Naive thymus-derived CD4-positive, alpha-beta T cell (primary cell): ENCODE measurements at regions of chr11 and their contacts with region 1.

Region 1: DNA sequence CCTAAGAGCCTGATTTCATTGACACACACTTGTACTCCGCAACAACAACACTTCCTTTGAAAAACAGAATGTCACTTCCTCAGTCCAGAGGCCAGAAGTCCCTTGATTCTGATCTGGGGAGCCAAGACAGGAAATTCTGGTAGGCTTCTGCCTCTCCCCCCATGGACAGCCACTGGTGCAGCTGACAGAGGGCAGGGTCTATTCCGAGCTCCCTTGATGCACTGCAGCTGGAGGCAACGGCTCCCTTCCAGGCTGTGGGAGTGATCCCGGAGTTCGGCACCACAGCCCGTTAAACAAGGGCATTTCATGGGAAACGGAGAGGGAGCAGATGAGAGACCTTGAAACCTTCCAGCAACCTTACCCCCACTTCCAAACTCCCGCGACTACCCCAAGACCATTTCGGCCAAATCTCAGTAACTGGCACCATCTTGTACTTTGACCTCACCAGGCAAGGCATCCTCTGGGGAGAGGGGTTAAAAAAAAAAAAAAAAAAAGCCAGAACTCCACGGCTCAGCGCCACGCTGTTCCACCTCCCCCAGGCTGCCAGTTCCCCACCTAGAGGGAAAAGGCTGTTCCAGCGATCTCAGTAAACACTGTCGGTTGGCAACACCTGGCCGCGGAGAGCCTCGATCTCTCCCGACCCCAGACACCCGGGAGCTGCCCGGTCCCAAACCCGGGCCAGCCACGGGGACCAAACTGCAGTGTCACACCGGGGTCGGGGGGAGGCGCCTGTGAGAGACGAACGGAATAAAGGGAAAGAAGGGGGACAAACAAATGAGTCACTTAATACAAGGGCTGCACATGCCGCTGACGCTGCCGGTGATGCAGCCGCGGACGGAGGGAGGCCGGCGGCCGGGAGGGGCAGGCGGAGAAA is 1.1 kb downstream of the GAB2 start:
- DNase-seq: peak; percentile 37 to 83 (median 62)
- ATAC-seq: peak; percentile 69
- H3K4me3 ChIP-seq: peak overlapping the region; percentile 62
- H3K4me3 Mint-ChIP-seq: peak overlapping the region; percentile 83 to 97 (median 92)
- H3K27ac ChIP-seq: peak overlapping the region; percentile 17
- H3K27ac Mint-ChIP-seq: peak overlapping the region; percentile 12 to 97 (median 73)
- H3K4me1 ChIP-seq: peaks cover 8 to 17% of the 10 kb centered on the region in 2 donors
- H3K4me1 Mint-ChIP-seq: peaks cover 21 to 68% (median 26%) of the 10 kb centered on the region in 7 donors
- H3K27me3 ChIP-seq: no peaks in the 10 kb centered on the region
- H3K27me3 Mint-ChIP-seq: peaks cover 15 to 26% (median 19%) of the 10 kb centered on the region in 5 donors

Region 2: DNA sequence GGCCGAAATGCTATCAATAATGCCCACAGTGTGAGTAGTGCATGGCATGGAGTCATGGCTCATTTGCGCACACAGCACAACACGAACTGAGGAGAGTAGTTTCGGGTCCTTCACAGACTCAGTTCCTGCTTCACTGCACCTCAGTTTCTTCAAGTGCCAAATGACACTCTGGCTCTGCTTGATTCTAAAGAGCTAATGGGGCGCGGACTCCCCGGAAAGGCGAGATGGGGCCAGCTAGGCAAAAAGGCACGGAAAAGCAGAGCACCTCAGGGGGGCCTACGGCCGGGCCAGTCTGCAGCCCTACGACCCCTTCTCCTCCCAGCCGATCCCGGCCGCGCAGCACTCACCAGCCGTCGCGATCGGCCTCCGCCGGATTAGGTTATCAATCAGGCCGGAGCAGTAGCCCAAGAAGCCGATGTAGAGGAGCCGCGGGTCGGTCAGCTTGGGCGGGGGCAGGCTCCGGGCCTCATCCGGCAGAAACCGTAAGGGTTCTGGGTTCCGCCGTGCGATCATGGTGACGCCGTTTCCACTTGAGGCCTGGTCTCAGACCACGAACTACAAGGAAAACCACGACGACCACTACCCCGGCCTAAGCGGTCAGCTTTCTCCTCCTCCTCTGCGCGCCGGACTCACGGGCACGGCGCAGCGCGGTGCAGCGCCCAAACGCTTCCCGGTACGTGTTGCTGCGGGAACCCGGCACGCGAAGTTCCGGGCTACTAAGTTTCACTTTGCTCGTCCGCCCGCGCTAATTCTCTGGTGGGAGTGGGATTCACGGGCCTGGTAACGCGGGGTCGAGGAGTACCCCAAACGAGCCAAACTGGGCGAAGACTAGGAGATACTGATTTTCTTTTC is 337.1 kb before region 1 on chr11 and contains the start of gene NDUFC2:
- CTCF ChIA-PET with region 1: interaction called, 3 read pairs
- POLR2A ChIA-PET with region 1: interaction called, 4 read pairs
- intact Hi-C with region 1: loop called (anchors 5 kb)
- DNase-seq: peak; percentile 37 to 73 (median 61)
- ATAC-seq: peak; percentile 90
- H3K4me3 ChIP-seq: peak within 1 kb of the TSS; percentile 99
- H3K4me3 Mint-ChIP-seq: peak within 1 kb of the TSS; percentile 92 to 98 (median 95)
- H3K27ac ChIP-seq: peak within 1 kb of the TSS; percentile 83
- H3K27ac Mint-ChIP-seq: peak within 1 kb of the TSS; percentile 90 to 97 (median 95)
- H3K4me1 ChIP-seq: peaks cover 38 to 43% of the 10 kb centered on the region in 2 donors
- H3K4me1 Mint-ChIP-seq: peaks cover 41 to 68% (median 53%) of the 10 kb centered on the region in 7 donors
- H3K27me3 ChIP-seq: no peaks in the 10 kb centered on the region
- H3K27me3 Mint-ChIP-seq: no peaks in the 10 kb centered on the region
- total RNA-seq, gene NDUFC2: 43.4 to 189 (median 64.7) TPM

Region 3: GRCh38 chr11:78202733-78203167 is 213.8 kb before region 1 on chr11:
- CTCF ChIA-PET with region 1: no interaction called
- POLR2A ChIA-PET with region 1: no interaction called
- intact Hi-C with region 1: loop called in 1 of 2 experiments (anchors 2 kb)
- DNase-seq: peak; percentile 43 to 92 (median 84)
- ATAC-seq: peak; percentile 86
- H3K4me3 ChIP-seq: peak overlapping the region; percentile 53
- H3K4me3 Mint-ChIP-seq: peak overlapping the region; percentile 79 to 91 (median 87)
- H3K27ac ChIP-seq: peak overlapping the region; percentile 91
- H3K27ac Mint-ChIP-seq: peak overlapping the region; percentile 93 to 100 (median 97)
- H3K4me1 ChIP-seq: peaks cover 19 to 36% of the 10 kb centered on the region in 2 donors
- H3K4me1 Mint-ChIP-seq: peaks cover 25 to 65% (median 55%) of the 10 kb centered on the region in 7 donors
- H3K27me3 ChIP-seq: no peaks in the 10 kb centered on the region
- H3K27me3 Mint-ChIP-seq: no peaks in the 10 kb centered on the region

Region 4: DNA sequence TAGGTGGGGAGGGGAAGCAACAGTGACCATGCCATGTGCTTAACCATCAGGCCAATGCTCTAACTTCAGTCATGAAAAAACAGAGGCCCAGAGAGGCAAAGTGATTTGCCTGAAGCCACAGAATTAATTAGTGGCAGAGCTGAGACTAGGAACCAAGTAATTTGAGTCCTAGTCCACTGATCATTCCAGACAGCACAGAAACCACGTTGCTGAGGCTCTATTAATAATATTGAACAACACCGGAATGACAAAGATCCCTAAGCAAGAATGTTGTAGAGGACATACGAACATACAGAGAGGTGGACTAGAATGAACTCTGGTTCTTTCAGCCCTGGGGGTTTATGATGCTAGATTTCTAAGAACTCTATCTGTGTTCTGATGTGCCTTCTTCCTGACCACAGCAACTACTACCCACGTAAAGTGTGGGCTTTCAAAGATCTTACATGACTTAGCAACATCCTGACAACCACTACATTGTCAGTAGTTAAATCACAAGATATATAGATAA is 91.2 kb before region 1 on chr11:
- CTCF ChIA-PET with region 1: no interaction called
- POLR2A ChIA-PET with region 1: no interaction called
- intact Hi-C with region 1: loop called in 1 of 2 experiments (anchors 1 kb)
- DNase-seq: peak in 6 of 9 donors; percentile 29 to 63 (median 42)
- ATAC-seq: peak; percentile 88
- H3K4me3 ChIP-seq: no peak overlapping the region
- H3K4me3 Mint-ChIP-seq: peak overlapping the region in 1 of 10 donors; percentile 63
- H3K27ac ChIP-seq: no peak overlapping the region
- H3K27ac Mint-ChIP-seq: peak overlapping the region in 5 of 9 donors; percentile 15 to 91 (median 47)
- H3K4me1 ChIP-seq: peaks cover 0 to 6% of the 10 kb centered on the region in 2 donors
- H3K4me1 Mint-ChIP-seq: peaks cover 3 to 83% (median 18%) of the 10 kb centered on the region in 7 donors
- H3K27me3 ChIP-seq: no peaks in the 10 kb centered on the region
- H3K27me3 Mint-ChIP-seq: no peaks in the 10 kb centered on the region

Region 5: DNA sequence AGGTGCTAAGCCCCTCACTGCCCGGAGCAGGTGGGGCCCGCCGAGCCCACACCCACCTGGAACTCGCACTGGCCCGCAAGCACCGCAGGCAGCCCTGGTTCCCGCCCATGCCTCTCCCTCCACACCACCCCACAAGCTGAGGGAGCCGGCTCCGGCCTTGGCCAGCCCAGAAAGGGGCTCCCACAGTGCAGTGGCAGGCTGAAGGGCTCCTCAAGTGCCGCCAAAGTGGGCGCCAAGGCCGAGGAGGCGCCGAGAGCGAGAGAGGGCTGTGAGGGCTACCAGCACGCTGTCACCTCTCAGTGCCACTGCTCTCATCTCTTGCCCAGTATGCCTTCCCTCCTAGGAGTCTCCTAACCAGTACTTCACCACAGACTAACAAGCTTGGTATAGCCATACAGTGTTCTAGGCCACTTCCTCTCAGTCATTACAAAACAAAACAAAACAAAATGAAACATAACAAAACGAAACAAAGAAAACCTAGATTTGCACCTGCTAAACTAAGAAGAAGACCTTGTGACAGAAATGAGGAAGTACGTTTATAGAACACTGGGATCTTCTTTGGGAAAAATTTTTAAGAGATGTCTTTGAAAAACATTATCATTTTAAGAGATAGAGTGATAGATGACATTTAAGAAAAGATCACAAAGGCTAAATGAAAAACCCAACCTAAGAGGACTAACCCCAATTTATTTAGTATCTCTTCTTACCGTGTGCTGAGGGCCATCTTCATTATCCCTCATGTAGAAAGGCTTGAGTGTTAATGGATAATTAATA is 48.8 kb after region 1 on chr11:
- CTCF ChIA-PET with region 1: no interaction called
- POLR2A ChIA-PET with region 1: no interaction called
- intact Hi-C with region 1: loop called in 1 of 2 experiments (anchors 2 kb)
- DNase-seq: peak in 6 of 9 donors; percentile 16 to 55 (median 26)
- ATAC-seq: peak; percentile 93
- H3K4me3 ChIP-seq: no peak overlapping the region
- H3K4me3 Mint-ChIP-seq: peak overlapping the region; percentile 37 to 81 (median 64)
- H3K27ac ChIP-seq: peak overlapping the region; percentile 3
- H3K27ac Mint-ChIP-seq: peak overlapping the region; percentile 54 to 95 (median 79)
- H3K4me1 ChIP-seq: peaks cover 4 to 5% of the 10 kb centered on the region in 2 donors
- H3K4me1 Mint-ChIP-seq: peaks cover 12 to 44% (median 17%) of the 10 kb centered on the region in 7 donors
- H3K27me3 ChIP-seq: no peaks in the 10 kb centered on the region
- H3K27me3 Mint-ChIP-seq: no peaks in the 10 kb centered on the region